ENCODE measurements at regions of chr14 and their contacts with region 1.

Region 1: DNA sequence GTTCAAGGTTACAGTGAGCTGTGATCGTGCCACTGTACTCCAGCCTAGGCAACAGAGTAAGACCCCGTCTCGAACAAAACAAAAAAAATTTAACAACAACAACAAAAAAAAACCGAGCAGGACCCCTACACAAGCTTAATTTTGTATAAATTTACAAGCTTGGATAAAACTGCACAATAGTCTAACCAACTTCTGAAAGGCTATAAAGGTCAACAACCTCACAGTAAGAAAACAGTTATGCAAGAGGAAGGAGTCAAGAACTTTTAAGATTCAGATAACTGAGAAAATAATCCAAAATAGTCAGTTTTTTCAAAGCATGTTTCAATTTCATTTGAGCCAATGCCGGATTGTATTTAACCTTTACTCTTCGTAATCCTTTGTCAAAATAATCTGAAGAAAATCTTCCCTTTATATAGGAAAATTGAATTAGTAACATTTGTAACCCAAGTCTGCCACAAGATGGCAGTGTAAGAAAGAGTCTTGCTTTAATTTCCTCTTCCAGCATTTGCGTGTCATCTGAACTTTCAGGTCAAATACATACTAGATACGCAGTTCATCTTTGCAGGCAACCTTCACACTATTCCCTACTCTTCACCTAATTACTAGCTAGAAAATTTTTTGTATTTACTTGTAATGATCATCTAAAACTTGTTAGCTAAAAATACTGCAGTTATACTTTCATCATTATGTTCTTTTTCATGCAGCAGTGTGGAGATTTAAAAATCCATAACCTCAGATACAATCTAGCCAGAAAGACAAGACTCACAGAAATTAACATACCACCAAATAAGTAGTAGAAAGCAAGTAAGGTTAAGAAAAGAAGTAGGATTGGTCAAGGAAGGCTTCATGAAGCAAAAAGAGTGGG is 5.8 kb downstream of the CCNB1IP1 start:
- DNase-seq: peak in 1 of 2 donors; percentile 46
- ATAC-seq: peak in 3 of 8 donors; percentile 54 to 64 (median 55)
- H3K4me3 ChIP-seq: no peak overlapping the region
- H3K27ac ChIP-seq: peak overlapping the region in 3 of 10 donors; percentile 3 to 47 (median 6)
- H3K4me1 ChIP-seq: peaks cover 0 to 36% (median 23%) of the 10 kb centered on the region in 9 donors
- H3K27me3 ChIP-seq: no peaks in the 10 kb centered on the region
- CTCF ChIP-seq: peak; percentile 57 to 90 (median 81)

Region 2: DNA sequence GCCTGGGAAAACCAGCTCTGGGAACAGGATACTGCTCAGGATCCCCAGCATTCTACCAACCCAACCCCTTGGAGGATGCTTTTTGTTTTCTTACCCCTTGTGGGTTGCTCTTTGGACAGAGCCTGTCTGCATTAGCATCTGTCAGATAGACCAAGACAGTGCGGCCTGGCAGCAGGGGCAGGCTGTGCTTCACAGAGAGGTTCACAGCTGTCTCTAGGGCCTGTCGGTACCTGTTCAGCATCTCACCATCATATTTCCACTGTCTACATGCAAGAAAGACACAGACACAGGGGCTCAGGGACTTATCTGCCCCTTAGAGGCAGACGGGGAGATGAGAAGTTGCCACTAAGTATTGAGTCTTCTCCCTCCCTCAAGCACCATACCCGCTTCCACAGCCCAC is 64.3 kb after region 1 on chr14:
- intact Hi-C with region 1: loop called in 1 of 10 experiments (anchors 10 kb)
- DNase-seq: no peak
- ATAC-seq: no peak
- H3K4me3 ChIP-seq: no peak overlapping the region
- H3K27ac ChIP-seq: no peak overlapping the region
- H3K4me1 ChIP-seq: no peaks in the 10 kb centered on the region
- H3K27me3 ChIP-seq: no peaks in the 10 kb centered on the region
- CTCF ChIP-seq: no peak